ENCODE measurements at regions of chr1 and their contacts with region 1.

Region 1: DNA sequence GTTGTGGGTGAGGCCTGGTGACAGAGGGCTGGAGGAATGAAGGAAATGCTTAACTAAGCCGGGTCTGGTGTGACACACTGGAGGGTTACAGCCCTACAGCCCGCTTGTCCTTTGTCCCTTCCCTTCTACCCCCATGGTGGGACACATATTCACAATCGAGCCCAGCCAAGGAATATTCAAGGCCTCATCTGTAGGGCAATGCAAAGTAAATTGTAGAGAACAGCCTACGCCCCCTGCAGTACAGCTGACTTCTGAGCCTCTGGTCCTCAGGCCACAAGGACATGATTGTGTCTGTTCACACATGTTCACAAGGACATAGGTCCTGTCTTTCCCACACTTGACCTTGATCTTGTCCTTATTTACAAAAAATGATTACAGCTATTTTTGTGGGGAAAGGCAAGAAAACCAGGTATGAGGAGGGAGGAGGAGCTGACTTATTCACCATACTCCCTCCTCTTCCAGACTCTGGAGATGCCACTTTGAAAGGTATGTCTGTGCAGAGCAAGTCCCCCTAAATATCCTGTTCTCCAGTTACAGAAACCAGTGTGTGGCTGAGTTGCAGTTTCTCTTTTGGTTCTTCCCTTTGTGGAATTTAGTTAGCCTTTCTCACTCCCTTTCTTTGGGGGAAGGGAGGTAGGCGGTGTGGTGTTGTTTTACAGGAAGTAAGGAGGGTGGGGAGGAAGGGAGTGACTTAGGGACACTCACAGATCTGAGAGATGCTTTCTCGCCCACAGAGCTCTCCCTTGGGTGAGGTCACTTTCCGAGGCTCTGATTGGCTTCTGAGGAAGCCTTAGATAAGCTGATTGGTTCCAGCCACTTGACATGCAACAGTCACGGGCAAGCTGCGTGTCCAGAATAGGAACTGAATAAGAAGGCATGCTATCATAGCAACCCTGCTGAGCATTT is 14.6 kb downstream of the POLR3GL start:
- DNase-seq: peak; percentile 45 to 96 (median 76)
- ATAC-seq: peak; percentile 72
- H3K4me3 ChIP-seq: peak overlapping the region; percentile 17 to 34
- H3K4me3 Mint-ChIP-seq: no peak overlapping the region
- H3K27ac ChIP-seq: peak overlapping the region; percentile 57 to 95
- H3K27ac Mint-ChIP-seq: no peak overlapping the region
- H3K4me1 ChIP-seq: peaks cover 70% of the 10 kb centered on the region
- H3K4me1 Mint-ChIP-seq: peaks cover 23% of the 10 kb centered on the region
- H3K27me3 ChIP-seq: no peaks in the 10 kb centered on the region
- H3K27me3 Mint-ChIP-seq: no peaks in the 10 kb centered on the region
- CTCF ChIP-seq: peak; percentile 27

Region 2: GRCh38 chr1:145891587-145892485 is 87.3 kb before region 1 on chr1:
- CTCF ChIA-PET with region 1: interaction called, 13 read pairs
- POLR2A ChIA-PET with region 1: no interaction called
- intact Hi-C with region 1: no loop called
- DNase-seq: peak in 8 of 9 experiments; percentile 16 to 65 (median 54)
- ATAC-seq: peak; percentile 85
- H3K4me3 ChIP-seq: no peak overlapping the region
- H3K4me3 Mint-ChIP-seq: no peak overlapping the region
- H3K27ac ChIP-seq: no peak overlapping the region
- H3K27ac Mint-ChIP-seq: no peak overlapping the region
- H3K4me1 ChIP-seq: no peaks in the 10 kb centered on the region
- H3K4me1 Mint-ChIP-seq: peaks cover under 1% of the 10 kb centered on the region
- H3K27me3 ChIP-seq: no peaks in the 10 kb centered on the region
- H3K27me3 Mint-ChIP-seq: no peaks in the 10 kb centered on the region
- CTCF ChIP-seq: peak; percentile 69

Region 3: GRCh38 chr1:145957443-145958319 is 21.4 kb before region 1 on chr1 and contains the start of gene LIX1L:
- CTCF ChIA-PET with region 1: interaction called, 16 read pairs
- POLR2A ChIA-PET with region 1: interaction called, 24 read pairs
- intact Hi-C with region 1: loop called in 1 of 2 experiments (anchors 1 kb)
- DNase-seq: peak; percentile 87 to 98 (median 95)
- ATAC-seq: peak; percentile 85
- H3K4me3 ChIP-seq: peak within 1 kb of the TSS; percentile 51 to 65
- H3K4me3 Mint-ChIP-seq: peak within 1 kb of the TSS; percentile 93
- H3K27ac ChIP-seq: peak within 1 kb of the TSS; percentile 77 to 80
- H3K27ac Mint-ChIP-seq: peak within 1 kb of the TSS; percentile 98
- H3K4me1 ChIP-seq: peaks cover 57% of the 10 kb centered on the region
- H3K4me1 Mint-ChIP-seq: peaks cover 73% of the 10 kb centered on the region
- H3K27me3 ChIP-seq: no peaks in the 10 kb centered on the region
- H3K27me3 Mint-ChIP-seq: no peaks in the 10 kb centered on the region
- CTCF ChIP-seq: no peak
- total RNA-seq, gene LIX1L: 14.7 to 16.4 TPM

Region 4: DNA sequence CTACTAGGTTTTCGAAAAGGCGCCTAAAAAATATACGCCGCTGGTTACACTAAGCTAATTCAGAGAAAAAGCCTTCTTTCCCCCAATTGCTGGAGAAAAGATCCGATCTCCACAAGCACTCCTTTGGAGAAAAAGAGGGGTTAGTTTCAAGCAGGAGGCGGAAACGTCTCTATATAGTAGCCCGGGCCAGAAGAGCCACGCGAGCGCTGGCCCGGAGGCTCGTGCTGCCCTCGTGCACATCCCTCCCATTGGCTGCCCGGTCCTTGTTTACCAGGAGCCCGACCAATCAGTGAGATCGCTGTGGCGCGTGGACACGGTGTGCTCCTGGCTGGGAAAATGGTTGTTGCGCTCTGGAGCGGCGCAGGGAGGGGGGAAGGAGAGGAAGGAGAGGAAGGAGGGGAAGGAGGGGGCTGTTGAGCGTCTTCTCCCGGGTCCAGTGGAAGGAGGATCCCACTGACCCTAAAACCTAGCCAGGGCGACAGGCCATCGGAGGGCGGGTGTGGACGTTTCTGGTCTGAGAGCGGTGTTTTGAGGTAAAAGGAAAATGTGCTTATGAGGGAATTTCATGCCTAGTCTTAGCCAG is 17.4 kb after region 1 on chr1 and contains the start of gene TXNIP:
- CTCF ChIA-PET with region 1: interaction called, 386 read pairs
- POLR2A ChIA-PET with region 1: interaction called, 366 read pairs
- intact Hi-C with region 1: loop called (anchors 1 kb)
- DNase-seq: peak; percentile 63 to 97 (median 93)
- ATAC-seq: peak; percentile 73
- H3K4me3 ChIP-seq: peak within 1 kb of the TSS; percentile 71 to 94
- H3K4me3 Mint-ChIP-seq: peak within 1 kb of the TSS; percentile 96
- H3K27ac ChIP-seq: peak within 1 kb of the TSS; percentile 93 to 98
- H3K27ac Mint-ChIP-seq: peak within 1 kb of the TSS; percentile 98
- H3K4me1 ChIP-seq: peaks cover 40% of the 10 kb centered on the region
- H3K4me1 Mint-ChIP-seq: peaks cover 58% of the 10 kb centered on the region
- H3K27me3 ChIP-seq: no peaks in the 10 kb centered on the region
- H3K27me3 Mint-ChIP-seq: no peaks in the 10 kb centered on the region
- CTCF ChIP-seq: no peak
- total RNA-seq, gene TXNIP: 627 to 652 TPM

Region 5: DNA sequence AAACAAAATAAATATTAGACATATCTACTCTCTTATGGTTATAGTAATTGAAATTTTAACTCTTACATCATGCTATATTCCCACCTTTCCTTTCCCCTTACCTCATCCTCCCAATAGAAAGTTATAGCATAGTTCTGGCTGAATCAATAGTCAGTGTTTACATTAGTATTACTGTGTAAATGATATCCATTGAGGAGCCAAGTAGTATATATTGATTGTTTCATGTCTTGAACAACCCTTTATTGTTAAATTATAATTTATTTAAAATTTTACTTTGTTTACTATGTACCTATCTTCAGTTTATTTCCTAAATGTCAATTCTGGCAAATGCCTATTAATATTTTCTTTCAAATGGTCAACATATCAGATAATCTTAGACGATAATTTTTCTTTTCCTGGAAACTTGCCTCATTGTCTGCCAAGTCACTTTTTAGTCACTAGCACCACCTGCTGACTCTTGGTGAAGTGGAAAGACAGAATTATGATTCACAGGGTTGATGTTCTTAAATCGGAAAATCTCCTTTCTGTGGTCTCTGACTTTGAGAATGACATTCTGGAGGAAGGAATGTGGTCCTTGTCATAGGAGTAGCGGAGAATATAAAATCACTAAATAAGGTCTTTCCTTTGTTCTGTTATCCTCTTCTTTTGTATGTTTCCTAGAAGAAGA is 33.8 kb after region 1 on chr1:
- CTCF ChIA-PET with region 1: interaction called, 386 read pairs
- POLR2A ChIA-PET with region 1: interaction called, 27 read pairs
- intact Hi-C with region 1: loop called (anchors 1 kb)
- DNase-seq: peak; percentile 31 to 86 (median 61)
- ATAC-seq: peak; percentile 87
- H3K4me3 ChIP-seq: no peak overlapping the region
- H3K4me3 Mint-ChIP-seq: no peak overlapping the region
- H3K27ac ChIP-seq: no peak overlapping the region
- H3K27ac Mint-ChIP-seq: no peak overlapping the region
- H3K4me1 ChIP-seq: peaks cover 1% of the 10 kb centered on the region
- H3K4me1 Mint-ChIP-seq: peaks cover 4% of the 10 kb centered on the region
- H3K27me3 ChIP-seq: no peaks in the 10 kb centered on the region
- H3K27me3 Mint-ChIP-seq: peaks cover 3% of the 10 kb centered on the region
- CTCF ChIP-seq: peak; percentile 97

Region 6: DNA sequence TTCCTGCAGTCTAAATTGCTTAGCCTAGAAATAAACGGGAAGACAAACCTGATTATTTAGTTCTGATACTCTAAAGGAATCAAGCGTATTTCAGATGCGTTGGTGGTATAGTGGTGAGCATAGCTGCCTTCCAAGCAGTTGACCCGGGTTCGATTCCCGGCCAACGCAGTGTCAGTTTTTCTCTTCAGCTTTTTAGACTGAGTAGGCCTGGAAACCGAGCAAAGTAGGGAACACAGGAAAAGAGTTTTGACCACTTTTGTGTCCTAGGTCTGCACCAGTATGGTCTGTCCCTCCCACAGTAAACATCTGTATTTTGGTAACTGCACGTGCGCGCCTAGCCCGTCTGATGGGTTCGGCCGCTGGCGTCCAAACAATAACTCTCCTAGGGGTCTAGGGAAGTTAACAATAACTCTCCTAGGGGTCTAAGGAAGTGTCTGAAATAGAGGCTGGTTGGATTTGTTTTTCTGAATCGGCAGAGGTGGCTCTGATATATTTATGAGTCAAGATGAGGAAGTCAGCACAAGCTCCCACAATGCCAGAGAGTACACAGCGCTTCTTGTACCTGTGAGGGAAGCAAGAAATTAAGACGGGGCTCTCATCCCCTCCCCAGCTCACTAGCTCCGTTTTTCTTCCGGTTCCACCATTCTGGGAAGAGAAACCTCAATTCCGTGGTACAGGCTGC is 58.0 kb after region 1 on chr1:
- CTCF ChIA-PET with region 1: interaction called, 12 read pairs
- POLR2A ChIA-PET with region 1: interaction called, 14 read pairs
- intact Hi-C with region 1: loop called in 1 of 2 experiments (anchors 2 kb)
- DNase-seq: peak; percentile 51 to 87 (median 70)
- ATAC-seq: peak; percentile 54
- H3K4me3 ChIP-seq: peak overlapping the region; percentile 72 to 94
- H3K4me3 Mint-ChIP-seq: peak overlapping the region; percentile 97
- H3K27ac ChIP-seq: peak overlapping the region; percentile 60 to 63
- H3K27ac Mint-ChIP-seq: peak overlapping the region; percentile 95
- H3K4me1 ChIP-seq: peaks cover 14% of the 10 kb centered on the region
- H3K4me1 Mint-ChIP-seq: peaks cover 29% of the 10 kb centered on the region
- H3K27me3 ChIP-seq: no peaks in the 10 kb centered on the region
- H3K27me3 Mint-ChIP-seq: no peaks in the 10 kb centered on the region
- CTCF ChIP-seq: no peak